Gastrocnemius medialis (tissue), 4 donors: ENCODE measurements at regions of chr1 and their contacts with region 1.

Region 1: DNA sequence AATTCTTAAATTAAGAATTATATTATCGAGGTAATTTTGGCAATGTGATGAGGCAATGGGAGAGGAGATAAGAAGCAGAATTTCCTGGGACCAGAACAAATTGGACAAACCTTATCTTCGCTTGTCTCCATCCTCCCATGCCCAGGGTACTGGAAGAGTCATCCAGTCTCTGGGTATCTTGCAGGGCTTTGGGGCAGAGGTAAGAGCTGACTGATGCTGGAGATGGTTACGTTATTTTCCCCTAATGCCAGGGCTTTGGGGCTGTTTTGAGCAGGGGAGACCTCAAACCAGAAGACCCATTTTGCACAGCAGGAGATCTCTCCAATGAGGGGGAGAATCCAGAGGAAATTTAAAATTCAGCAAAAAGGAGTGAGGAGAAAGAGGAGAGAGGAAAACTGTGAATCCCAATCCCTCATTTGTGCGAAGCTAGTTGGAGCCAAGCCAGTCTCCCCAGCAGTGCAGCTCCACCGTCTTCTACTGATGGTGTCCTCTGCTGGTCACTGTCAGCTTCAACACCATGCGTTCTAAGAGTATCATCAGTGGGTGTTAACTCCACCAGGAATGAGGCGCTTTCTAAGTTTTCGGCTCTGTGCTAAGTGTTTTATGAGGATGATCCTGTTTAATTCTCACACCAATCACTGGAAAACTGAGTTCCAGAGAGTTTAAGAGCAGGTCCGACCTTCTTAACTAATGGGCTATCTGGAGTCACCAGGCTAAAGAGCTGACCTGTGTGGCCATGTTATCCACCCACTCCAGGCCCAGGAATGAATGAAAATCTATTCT is 86.8 kb upstream of the CD34 start:
- DNase-seq: peak; percentile 55 to 70
- ATAC-seq: peak; percentile 89 to 95
- H3K4me3 ChIP-seq: no peak overlapping the region
- H3K27ac ChIP-seq: no peak overlapping the region
- H3K4me1 ChIP-seq: peaks cover 0 to 4% of the 10 kb centered on the region in 2 donors
- H3K27me3 ChIP-seq: no peaks in the 10 kb centered on the region
- CTCF ChIP-seq: peak; percentile 67 to 81 (median 74)
- POLR2A ChIP-seq: no peak

Region 2: GRCh38 chr1:207805841-207806421 is 191.7 kb before region 1 on chr1:
- in situ Hi-C with region 1: no loop called
- intact Hi-C with region 1: no loop called
- DNase-seq: peak; percentile 91 to 97
- ATAC-seq: peak; percentile 73 to 82
- H3K4me3 ChIP-seq: peak overlapping the region in 3 of 4 donors; percentile 13 to 22 (median 16)
- H3K27ac ChIP-seq: peak overlapping the region; percentile 96 to 100 (median 99)
- H3K4me1 ChIP-seq: peaks cover 72 to 74% of the 10 kb centered on the region in 2 donors
- H3K27me3 ChIP-seq: no peaks in the 10 kb centered on the region
- CTCF ChIP-seq: no peak
- POLR2A ChIP-seq: peak in 1 of 2 donors; percentile 64

Region 3: GRCh38 chr1:207885129-207886032 is 112.3 kb before region 1 on chr1:
- in situ Hi-C with region 1: no loop called
- intact Hi-C with region 1: loop called (anchors 1 kb)
- DNase-seq: peak; percentile 72 to 76
- ATAC-seq: peak; percentile 83 to 89
- H3K4me3 ChIP-seq: no peak overlapping the region
- H3K27ac ChIP-seq: peak overlapping the region; percentile 21 to 81 (median 74)
- H3K4me1 ChIP-seq: peaks cover 42 to 55% of the 10 kb centered on the region in 2 donors
- H3K27me3 ChIP-seq: no peaks in the 10 kb centered on the region
- CTCF ChIP-seq: peak; percentile 95 to 98 (median 97)
- POLR2A ChIP-seq: no peak

Region 4: GRCh38 chr1:207963427-207964194 is 34.1 kb before region 1 on chr1:
- in situ Hi-C with region 1: no loop called
- intact Hi-C with region 1: no loop called
- DNase-seq: peak; percentile 71 to 87
- ATAC-seq: peak; percentile 53 to 68
- H3K4me3 ChIP-seq: peak overlapping the region; percentile 61 to 95 (median 67)
- H3K27ac ChIP-seq: peak overlapping the region; percentile 86 to 97 (median 94)
- H3K4me1 ChIP-seq: peaks cover 34 to 47% of the 10 kb centered on the region in 2 donors
- H3K27me3 ChIP-seq: no peaks in the 10 kb centered on the region
- CTCF ChIP-seq: peak; percentile 92 to 100 (median 100)
- POLR2A ChIP-seq: peak; percentile 70 to 75

Region 5: GRCh38 chr1:208047476-208047934 is 49.8 kb after region 1 on chr1:
- in situ Hi-C with region 1: no loop called
- intact Hi-C with region 1: no loop called
- DNase-seq: peak; percentile 71 to 81
- ATAC-seq: peak; percentile 78 to 85
- H3K4me3 ChIP-seq: no peak overlapping the region
- H3K27ac ChIP-seq: peak overlapping the region; percentile 65 to 81 (median 74)
- H3K4me1 ChIP-seq: peaks cover 24 to 29% of the 10 kb centered on the region in 2 donors
- H3K27me3 ChIP-seq: no peaks in the 10 kb centered on the region
- CTCF ChIP-seq: no peak
- POLR2A ChIP-seq: no peak

Region 6: DNA sequence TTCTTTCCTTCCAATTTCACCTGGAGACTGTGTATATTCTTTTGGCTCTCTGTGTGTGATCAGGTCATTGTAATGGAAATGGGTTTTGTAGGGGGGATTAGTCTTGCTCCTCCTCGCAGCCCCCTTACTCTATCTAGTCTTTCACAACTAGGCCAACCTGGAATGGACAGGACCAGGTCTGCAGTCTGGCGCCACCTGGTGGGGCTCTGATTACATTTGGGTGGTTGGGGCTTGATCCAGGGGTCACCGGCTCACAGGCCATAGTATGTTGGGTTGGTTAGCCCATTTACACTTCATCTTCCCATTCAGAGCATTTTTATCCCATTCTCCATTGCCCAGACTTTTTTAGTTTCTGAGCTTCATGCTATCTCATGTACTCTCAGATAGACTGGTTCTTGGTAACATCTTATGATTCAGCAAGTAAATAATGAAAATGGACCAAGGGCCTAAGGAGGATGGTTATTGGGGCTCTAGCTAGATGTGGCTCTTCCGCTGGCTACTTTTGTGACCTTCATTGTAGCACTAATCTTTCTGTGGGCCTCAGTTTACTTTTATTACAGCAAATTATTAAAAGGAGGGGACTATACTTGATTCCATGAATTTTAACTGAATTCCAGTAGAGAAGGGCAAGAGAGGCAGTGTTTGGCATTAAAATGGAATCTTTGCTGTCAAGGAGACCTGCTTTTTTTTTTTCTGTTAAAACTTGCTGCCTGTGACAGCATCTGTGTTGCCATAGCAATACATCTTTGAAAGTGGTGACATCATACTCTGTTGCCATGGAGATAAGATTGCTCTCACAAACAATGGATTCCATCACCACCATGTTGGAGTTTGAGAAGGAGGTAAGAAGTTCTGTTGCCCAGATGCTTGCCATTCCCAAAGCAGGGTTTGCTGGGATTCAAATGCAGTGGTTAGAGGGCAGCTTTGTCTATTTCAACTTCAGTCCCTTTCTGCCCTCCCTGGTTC is 96.4 kb after region 1 on chr1:
- in situ Hi-C with region 1: no loop called
- intact Hi-C with region 1: no loop called
- DNase-seq: peak; percentile 27 to 48
- ATAC-seq: peak in 1 of 2 donors; percentile 29
- H3K4me3 ChIP-seq: no peak overlapping the region
- H3K27ac ChIP-seq: no peak overlapping the region
- H3K4me1 ChIP-seq: peaks cover 16 to 18% of the 10 kb centered on the region in 2 donors
- H3K27me3 ChIP-seq: no peaks in the 10 kb centered on the region
- CTCF ChIP-seq: peak; percentile 47 to 67 (median 62)
- POLR2A ChIP-seq: no peak